ENCODE measurements at regions of chr2 and their contacts with region 1.

Region 1: DNA sequence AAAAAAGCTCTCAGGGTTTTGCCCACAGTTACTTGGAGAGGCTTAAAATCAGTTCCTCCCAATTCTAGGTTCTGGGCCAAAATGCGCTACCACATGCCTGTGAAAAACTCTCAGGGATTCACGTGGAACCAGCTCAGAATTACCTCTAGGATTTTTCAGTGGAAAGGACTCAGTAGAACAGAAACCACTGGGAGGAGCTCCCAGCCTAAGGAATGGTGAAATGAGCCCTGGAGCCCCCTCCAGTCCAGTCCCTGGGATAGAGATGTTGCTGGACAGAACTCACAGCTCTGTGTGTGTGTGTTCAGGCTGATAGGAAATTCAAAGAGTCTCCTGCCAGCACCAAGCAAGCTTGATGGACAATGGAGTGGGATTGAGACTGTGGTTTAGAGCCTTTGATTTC is 21.1 kb upstream of the SLC9A4 start:
- DNase-seq: no peak
- H3K4me3 ChIP-seq: no peak overlapping the region
- CTCF ChIP-seq: no peak
- POLR2A ChIP-seq: no peak

Region 2: DNA sequence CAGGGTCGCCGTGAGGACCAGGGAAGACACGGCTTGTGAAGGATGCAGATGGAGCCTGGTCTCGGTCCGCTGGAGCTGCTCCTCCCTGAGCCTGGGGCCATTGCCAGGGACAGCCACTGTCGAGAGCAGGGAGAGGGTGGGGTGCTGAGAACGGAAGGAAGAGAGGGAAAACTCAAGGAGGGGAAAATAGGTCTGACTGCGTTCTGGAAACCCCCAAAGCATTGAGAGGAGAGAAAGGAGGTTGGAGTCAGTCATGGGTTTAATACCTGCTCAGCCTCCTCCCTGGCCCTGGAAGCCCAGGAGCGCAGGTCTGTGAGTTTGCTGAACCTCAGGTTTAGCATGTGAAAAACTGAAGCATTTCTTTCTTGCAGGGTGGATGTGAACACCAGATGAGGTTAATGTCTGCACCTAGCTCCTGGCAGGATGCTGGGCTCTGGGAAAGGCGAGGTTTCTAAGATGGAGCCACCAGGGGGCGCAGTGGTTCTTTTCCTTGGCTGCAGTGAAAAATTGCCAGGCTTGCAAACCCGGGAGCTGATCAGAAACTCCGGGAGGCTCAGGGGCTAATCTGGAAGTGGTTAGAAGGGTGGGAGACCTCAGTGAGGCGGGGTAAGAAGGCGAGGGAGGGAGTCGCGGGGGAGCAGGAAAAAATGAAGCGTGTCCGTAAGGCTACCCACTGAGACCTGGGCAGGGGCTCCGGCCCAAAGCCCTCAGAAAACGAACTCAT is 1109.9 kb before region 1 on chr2:
- intact Hi-C with region 1: loop called (anchors 10 kb)
- DNase-seq: peak; percentile 64 to 96
- H3K4me3 ChIP-seq: no peak overlapping the region
- CTCF ChIP-seq: no peak
- POLR2A ChIP-seq: no peak

Measured in lower leg skin (tissue), 4 donors.